GM12878 (cell line): ENCODE measurements at regions of chr3 and their contacts with region 1.

Region 1: GRCh38 chr3:185942907-185943759 is 5.3 kb upstream of the TRA2B start:
- DNase-seq: peak; percentile 51
- ATAC-seq: peak; percentile 98
- H3K4me3 ChIP-seq: no peak overlapping the region
- H3K27ac ChIP-seq: no peak overlapping the region
- H3K4me1 ChIP-seq: peaks cover 5% of the 10 kb centered on the region; the same call in 1 of the 2 replicates
- H3K27me3 ChIP-seq: 0 out of 4 replicates have a peak, but pooled peaks cover 0 to 3% of the 10 kb centered on the region in 2 experiments
- CTCF ChIP-seq: peak; percentile 94 to 99 (median 99)
- EP300 ChIP-seq: no peak
- POLR2A ChIP-seq: no peak
- RAD21 ChIP-seq: peak; percentile 67

Region 2: GRCh38 chr3:185659942-185660921 is 282.9 kb before region 1 on chr3:
- CTCF ChIA-PET with region 1: interaction called, 12 read pairs
- POLR2A ChIA-PET with region 1: no interaction called
- RAD21 ChIA-PET with region 1: interaction called, 10 read pairs
- SMC1A ChIA-PET with region 1: no interaction called
- in situ Hi-C with region 1: no loop called
- intact Hi-C with region 1: no loop called
- DNase-seq: peak; percentile 8
- ATAC-seq: peak; percentile 97
- H3K4me3 ChIP-seq: no peak overlapping the region
- H3K27ac ChIP-seq: no peak overlapping the region
- H3K4me1 ChIP-seq: no peaks in the 10 kb centered on the region
- H3K27me3 ChIP-seq: peaks cover 2 to 6% of the 10 kb centered on the region in 2 experiments; a peak in 3 of 4 replicates
- CTCF ChIP-seq: peak; percentile 97 to 99 (median 98); a peak in 5 of 6 replicates
- EP300 ChIP-seq: no peak
- POLR2A ChIP-seq: no peak
- RAD21 ChIP-seq: peak; percentile 94

Region 3: DNA sequence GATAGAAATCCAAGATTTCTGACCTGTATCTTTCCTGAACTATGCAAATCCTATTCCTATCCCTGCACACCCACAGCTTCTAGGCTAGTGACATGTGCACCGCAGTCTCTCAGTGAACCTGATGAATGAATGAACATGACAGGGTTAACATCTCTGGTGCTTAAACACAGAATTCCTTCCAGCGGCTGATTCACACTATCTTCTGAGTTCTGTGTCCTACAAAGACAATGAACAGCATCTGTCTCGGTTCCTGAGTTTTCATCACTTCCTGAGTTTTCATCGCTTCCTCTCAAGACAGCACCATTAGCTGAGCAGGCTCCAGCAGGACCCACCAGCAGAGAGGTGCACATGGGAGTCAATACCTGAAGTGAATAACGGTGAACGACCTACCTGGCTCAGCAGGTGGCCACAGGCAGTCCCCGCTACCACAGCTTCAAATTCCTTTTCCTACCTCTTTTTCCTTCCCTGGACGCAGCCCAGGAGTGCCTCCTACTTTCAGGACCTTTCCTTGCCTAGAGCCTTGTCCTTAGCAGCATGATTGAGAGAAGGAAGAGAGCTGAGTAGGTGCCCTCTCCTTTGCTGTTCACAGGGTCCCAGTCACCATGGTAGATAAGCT is 231.8 kb before region 1 on chr3:
- CTCF ChIA-PET with region 1: no interaction called
- POLR2A ChIA-PET with region 1: no interaction called
- RAD21 ChIA-PET with region 1: no interaction called
- SMC1A ChIA-PET with region 1: no interaction called
- in situ Hi-C with region 1: no loop called
- intact Hi-C with region 1: no loop called
- DNase-seq: no peak
- ATAC-seq: no peak
- H3K4me3 ChIP-seq: no peak overlapping the region
- H3K27ac ChIP-seq: no peak overlapping the region
- H3K4me1 ChIP-seq: no peaks in the 10 kb centered on the region
- H3K27me3 ChIP-seq: peaks cover 0 to 6% of the 10 kb centered on the region in 2 experiments; a peak in 1 of 4 replicates
- CTCF ChIP-seq: no peak
- EP300 ChIP-seq: no peak
- POLR2A ChIP-seq: no peak
- RAD21 ChIP-seq: no peak

Region 4: GRCh38 chr3:185959609-185960517 is 16.7 kb after region 1 on chr3:
- CTCF ChIA-PET with region 1: interaction called, 81 read pairs
- POLR2A ChIA-PET with region 1: no interaction called
- RAD21 ChIA-PET with region 1: interaction called, 20 read pairs
- SMC1A ChIA-PET with region 1: interaction called, 24 read pairs
- in situ Hi-C with region 1: no loop called
- intact Hi-C with region 1: no loop called
- DNase-seq: no peak
- ATAC-seq: no peak; the same call in 2 of the 3 replicates
- H3K4me3 ChIP-seq: no peak overlapping the region
- H3K27ac ChIP-seq: no peak overlapping the region
- H3K4me1 ChIP-seq: no peaks in the 10 kb centered on the region
- H3K27me3 ChIP-seq: no peaks in the 10 kb centered on the region
- CTCF ChIP-seq: no peak
- EP300 ChIP-seq: no peak
- POLR2A ChIP-seq: no peak
- RAD21 ChIP-seq: no peak

Region 5: DNA sequence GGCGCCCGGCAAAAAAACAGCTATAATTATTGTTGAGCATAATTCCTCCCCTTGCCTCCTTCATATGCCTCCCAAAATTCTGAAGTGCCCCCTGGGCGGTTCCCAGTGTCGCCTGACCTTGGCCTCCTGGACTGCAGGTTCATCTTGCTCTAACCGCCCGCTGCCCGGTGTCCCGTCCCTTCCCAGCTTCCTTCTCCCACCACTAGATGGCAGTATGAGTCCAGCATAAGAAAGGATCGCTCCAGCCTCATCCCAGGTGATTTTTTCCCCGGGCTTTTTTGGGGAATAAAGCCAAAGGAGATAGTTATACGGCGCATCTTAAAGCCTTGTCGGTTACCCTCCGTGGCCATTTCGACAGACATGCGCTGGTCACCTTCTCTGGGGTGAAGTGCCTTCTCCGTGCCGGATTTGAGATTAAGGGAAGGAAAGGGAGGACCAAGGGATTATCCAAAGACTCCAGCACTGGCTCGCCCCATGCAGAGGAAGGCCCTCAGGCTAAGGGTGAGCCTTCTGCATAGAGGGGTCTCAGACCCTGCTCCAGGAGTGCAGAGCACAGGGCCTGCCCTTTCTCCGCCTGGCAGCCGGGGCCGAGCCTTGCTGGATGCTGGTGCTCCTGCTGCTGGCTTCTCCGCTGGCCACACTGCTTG is 40.5 kb after region 1 on chr3:
- CTCF ChIA-PET with region 1: interaction called, 60 read pairs
- POLR2A ChIA-PET with region 1: interaction called, 4 read pairs
- RAD21 ChIA-PET with region 1: interaction called, 19 read pairs
- SMC1A ChIA-PET with region 1: interaction called, 24 read pairs
- in situ Hi-C with region 1: no loop called
- intact Hi-C with region 1: no loop called
- DNase-seq: no peak
- ATAC-seq: peak; percentile 96
- H3K4me3 ChIP-seq: no peak overlapping the region
- H3K27ac ChIP-seq: no peak overlapping the region
- H3K4me1 ChIP-seq: no peaks in the 10 kb centered on the region
- H3K27me3 ChIP-seq: no peaks in the 10 kb centered on the region
- CTCF ChIP-seq: peak; percentile 84 to 87 (median 86)
- EP300 ChIP-seq: no peak
- POLR2A ChIP-seq: no peak
- RAD21 ChIP-seq: peak; percentile 99

Region 6: DNA sequence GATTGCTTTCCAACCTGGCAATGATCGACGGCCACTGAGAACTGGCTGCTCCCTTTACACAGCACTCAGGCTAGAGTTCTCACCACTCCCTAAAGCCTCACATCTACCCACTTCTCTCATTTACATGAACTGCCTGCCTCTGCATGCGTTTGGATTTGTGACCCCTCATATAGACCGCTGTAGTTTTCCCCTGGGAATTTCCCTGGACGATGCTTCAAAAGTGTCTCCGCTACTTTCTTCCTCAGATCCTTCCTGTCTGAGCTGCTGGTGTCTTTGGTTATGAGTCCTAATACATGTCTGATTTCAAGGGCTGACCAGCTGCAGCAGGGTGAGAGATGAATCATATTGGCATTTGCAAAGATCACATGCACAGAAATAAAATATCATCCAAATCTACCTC is 282.5 kb after region 1 on chr3:
- CTCF ChIA-PET with region 1: interaction called, 11 read pairs
- POLR2A ChIA-PET with region 1: no interaction called
- RAD21 ChIA-PET with region 1: no interaction called
- SMC1A ChIA-PET with region 1: no interaction called
- in situ Hi-C with region 1: no loop called
- intact Hi-C with region 1: no loop called
- DNase-seq: peak; percentile 45
- ATAC-seq: peak; percentile 76
- H3K4me3 ChIP-seq: no peak overlapping the region
- H3K27ac ChIP-seq: no peak overlapping the region
- H3K4me1 ChIP-seq: peaks cover 25% of the 10 kb centered on the region
- H3K27me3 ChIP-seq: no peaks in the 10 kb centered on the region; a peak in 2 of 4 replicates
- CTCF ChIP-seq: no peak
- EP300 ChIP-seq: no peak
- POLR2A ChIP-seq: no peak
- RAD21 ChIP-seq: no peak

Region 7: GRCh38 chr3:186534113-186534669 is 591.1 kb after region 1 on chr3:
- CTCF ChIA-PET with region 1: interaction called, 51 read pairs
- POLR2A ChIA-PET with region 1: no interaction called
- RAD21 ChIA-PET with region 1: interaction called, 29 read pairs
- SMC1A ChIA-PET with region 1: interaction called, 25 read pairs
- in situ Hi-C with region 1: no loop called
- intact Hi-C with region 1: no loop called
- DNase-seq: peak; percentile 95
- ATAC-seq: peak; percentile 87
- H3K4me3 ChIP-seq: peak overlapping the region; percentile 13; the same call in 1 of the 2 replicates
- H3K27ac ChIP-seq: peak overlapping the region; percentile 86
- H3K4me1 ChIP-seq: peaks cover 78% of the 10 kb centered on the region
- H3K27me3 ChIP-seq: no peaks in the 10 kb centered on the region
- CTCF ChIP-seq: no peak
- EP300 ChIP-seq: peak; percentile 88 to 89
- POLR2A ChIP-seq: no peak
- RAD21 ChIP-seq: 0 out of 2 replicates have a peak, but pooled peaks have one; percentile 12

Region 8: DNA sequence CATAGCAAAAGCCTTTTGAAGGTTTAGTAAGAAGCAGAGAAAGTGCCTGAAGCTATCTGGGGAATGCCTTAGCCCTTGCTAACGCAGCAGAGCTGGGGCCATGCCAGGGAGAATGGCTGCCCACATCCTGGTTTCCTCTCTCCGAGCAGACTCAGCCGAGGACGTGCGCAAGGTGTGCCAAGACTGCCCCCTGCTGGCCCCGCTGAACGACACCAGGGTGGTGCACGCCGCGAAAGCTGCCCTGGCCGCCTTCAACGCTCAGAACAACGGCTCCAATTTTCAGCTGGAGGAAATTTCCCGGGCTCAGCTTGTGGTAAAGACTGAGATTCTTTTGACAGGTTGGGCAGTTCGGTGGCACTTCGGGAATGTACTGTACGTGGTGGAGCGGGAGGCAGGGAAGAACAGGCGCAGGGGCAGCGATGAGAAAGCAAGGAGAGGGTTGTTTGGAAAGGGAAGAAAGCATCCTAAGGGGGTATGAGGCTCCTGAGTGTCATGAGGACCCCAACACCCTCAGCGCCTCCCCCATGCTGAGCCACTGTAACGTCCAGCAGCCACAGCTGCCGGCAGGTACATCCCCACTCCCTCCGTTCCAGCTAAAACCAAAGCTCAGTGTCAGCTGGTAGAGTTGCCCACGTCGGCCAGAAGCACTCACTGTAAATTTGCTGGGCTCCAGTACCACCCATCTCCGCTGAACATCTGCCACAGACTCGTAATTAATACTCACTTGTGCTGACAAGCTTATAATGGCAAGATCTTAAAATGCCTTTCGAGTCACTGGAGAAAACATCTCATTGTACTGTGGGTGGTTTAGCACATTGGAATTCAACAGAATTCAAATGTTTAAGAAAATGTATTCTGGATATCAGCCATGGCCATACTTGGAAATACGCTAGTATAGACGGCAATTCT is 674.2 kb after region 1 on chr3:
- CTCF ChIA-PET with region 1: interaction called, 45 read pairs
- POLR2A ChIA-PET with region 1: no interaction called
- RAD21 ChIA-PET with region 1: interaction called, 19 read pairs
- SMC1A ChIA-PET with region 1: interaction called, 5 read pairs
- in situ Hi-C with region 1: no loop called
- intact Hi-C with region 1: no loop called
- DNase-seq: peak; percentile 59
- ATAC-seq: peak; percentile 98
- H3K4me3 ChIP-seq: no peak overlapping the region; the same call in 1 of the 2 replicates
- H3K27ac ChIP-seq: no peak overlapping the region
- H3K4me1 ChIP-seq: peaks cover 7% of the 10 kb centered on the region
- H3K27me3 ChIP-seq: peaks cover 2 to 3% of the 10 kb centered on the region in 2 experiments; a peak in 3 of 4 replicates
- CTCF ChIP-seq: peak; percentile 94 to 97 (median 96)
- EP300 ChIP-seq: no peak
- POLR2A ChIP-seq: no peak
- RAD21 ChIP-seq: peak; percentile 77

Region 9: DNA sequence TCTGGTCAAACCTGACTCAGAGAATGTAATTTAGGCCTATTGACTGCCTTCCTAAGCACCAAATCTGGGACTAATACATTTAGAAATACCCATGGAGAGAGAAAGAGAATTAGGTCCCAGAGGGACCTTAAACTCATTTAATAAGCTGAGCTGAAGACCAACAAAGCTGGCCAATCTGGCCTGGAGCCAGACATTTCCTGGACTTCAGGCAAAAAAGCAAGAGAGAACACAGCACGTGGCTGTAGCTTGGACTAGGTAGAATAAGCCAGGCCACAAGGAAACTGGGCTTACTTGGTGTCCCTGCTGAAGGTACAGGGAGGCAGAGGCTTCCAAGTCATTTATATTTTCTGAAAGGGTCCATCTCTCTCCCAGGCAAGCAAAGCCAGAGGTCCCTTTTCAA is 1513.1 kb after region 1 on chr3:
- CTCF ChIA-PET with region 1: no interaction called
- POLR2A ChIA-PET with region 1: no interaction called
- RAD21 ChIA-PET with region 1: no interaction called
- SMC1A ChIA-PET with region 1: no interaction called
- in situ Hi-C with region 1: no loop called
- intact Hi-C with region 1: no loop called
- DNase-seq: no peak
- ATAC-seq: no peak
- H3K4me3 ChIP-seq: no peak overlapping the region
- H3K27ac ChIP-seq: no peak overlapping the region
- H3K4me1 ChIP-seq: no peaks in the 10 kb centered on the region
- H3K27me3 ChIP-seq: no peaks in the 10 kb centered on the region
- CTCF ChIP-seq: no peak
- EP300 ChIP-seq: no peak
- POLR2A ChIP-seq: no peak
- RAD21 ChIP-seq: no peak